ENCODE measurements at regions of chrX and their contacts with region 1.

Region 1: DNA sequence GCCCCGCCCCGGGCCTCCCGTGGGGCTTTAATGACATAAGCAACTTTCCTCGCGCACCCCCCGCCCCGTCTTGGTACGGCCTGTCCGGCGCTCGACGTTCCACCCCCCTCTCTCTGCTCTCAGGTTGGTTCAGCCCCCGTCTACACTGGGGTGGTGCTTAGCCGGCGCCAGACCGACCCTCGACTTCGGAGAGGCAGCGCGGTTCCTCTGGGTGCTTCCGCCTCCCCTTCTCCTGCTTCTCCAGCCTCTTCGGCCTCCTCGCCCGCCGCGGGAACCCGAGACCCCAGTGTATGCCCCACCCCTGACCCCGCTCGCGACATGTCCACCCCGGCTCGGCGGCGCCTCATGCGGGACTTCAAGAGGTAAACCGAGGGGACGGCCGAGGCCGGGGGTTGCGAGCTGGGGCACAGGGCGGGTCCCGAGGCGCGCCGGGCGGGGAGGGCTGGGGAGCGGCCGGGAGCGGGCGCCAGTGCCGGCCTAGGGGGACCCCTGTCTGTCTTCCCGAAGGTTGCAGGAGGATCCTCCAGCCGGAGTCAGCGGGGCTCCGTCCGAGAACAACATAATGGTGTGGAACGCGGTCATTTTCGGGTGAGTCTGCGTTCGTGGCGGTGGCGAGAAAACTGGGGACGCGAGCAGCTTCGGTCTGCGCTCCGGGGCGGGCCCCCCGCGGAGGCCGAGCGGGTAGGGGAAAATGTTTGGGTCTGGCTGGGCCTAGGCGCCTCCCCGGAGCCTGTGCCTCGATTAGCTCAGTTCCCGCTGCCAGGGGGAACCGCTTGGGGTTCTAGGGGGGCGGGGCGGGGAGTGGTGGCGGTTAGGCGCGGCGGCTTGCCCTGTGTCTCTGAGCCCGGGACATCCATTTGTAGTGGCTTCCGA is at the start of gene UBE2A:
- DNase-seq: peak; percentile 87 to 95 (median 92)
- ATAC-seq: peak; percentile 93
- H3K4me3 ChIP-seq: peak within 1 kb of the TSS; percentile 88
- H3K27ac ChIP-seq: peak within 1 kb of the TSS; percentile 88
- H3K4me1 ChIP-seq: peaks cover 8 to 10% of the 10 kb centered on the region in 2 experiments; a peak in 3 of 5 replicates
- H3K27me3 ChIP-seq: no peaks in the 10 kb centered on the region
- CTCF ChIP-seq: peak; percentile 49 to 65 (median 56); a peak in 5 of 6 replicates
- EP300 ChIP-seq: peak; percentile 8; the same call in 1 of the 2 replicates
- POLR2A ChIP-seq: peak; percentile 97
- RAD21 ChIP-seq: peak; percentile 48 to 53
- polyA plus RNA-seq, gene UBE2A: 23.8 to 34.0 TPM

Region 2: DNA sequence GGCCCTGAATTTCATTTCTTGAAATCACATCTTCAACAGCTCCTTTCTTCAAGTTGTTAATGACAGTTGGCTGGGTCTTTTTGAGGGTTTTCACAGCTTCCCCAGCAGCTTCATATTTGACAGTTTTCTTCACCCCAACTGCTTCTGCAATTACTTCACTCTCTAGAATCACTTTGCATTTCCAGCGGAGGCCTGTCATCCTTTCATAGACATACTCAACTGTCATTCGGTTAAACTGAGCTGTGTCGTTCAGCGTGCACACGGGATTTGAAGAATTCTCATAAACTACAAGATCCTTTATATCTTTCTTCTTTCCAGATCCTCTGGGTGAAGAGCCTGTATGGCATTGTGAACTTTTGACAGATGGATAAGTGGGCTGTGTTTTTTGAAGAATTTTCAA is 15.2 kb after region 1 on chrX:
- CTCF ChIA-PET with region 1: no interaction called
- POLR2A ChIA-PET with region 1: interaction called, 12 read pairs
- in situ Hi-C with region 1: no loop called
- intact Hi-C with region 1: no loop called
- DNase-seq: no peak
- ATAC-seq: no peak
- H3K4me3 ChIP-seq: no peak overlapping the region
- H3K27ac ChIP-seq: no peak overlapping the region
- H3K4me1 ChIP-seq: no peaks in the 10 kb centered on the region
- H3K27me3 ChIP-seq: no peaks in the 10 kb centered on the region
- CTCF ChIP-seq: no peak
- EP300 ChIP-seq: no peak
- POLR2A ChIP-seq: no peak
- RAD21 ChIP-seq: no peak

Region 3: GRCh38 chrX:119698845-119699244 is 124.2 kb after region 1 on chrX:
- CTCF ChIA-PET with region 1: no interaction called
- POLR2A ChIA-PET with region 1: no interaction called
- in situ Hi-C with region 1: no loop called
- intact Hi-C with region 1: no loop called
- DNase-seq: peak; percentile 23 to 66 (median 42)
- ATAC-seq: peak; percentile 78
- H3K4me3 ChIP-seq: no peak overlapping the region
- H3K27ac ChIP-seq: no peak overlapping the region
- H3K4me1 ChIP-seq: peaks cover 0 to 13% of the 10 kb centered on the region in 2 experiments; a peak in 3 of 5 replicates
- H3K27me3 ChIP-seq: no peaks in the 10 kb centered on the region
- CTCF ChIP-seq: peak; percentile 58 to 71 (median 65)
- EP300 ChIP-seq: no peak
- POLR2A ChIP-seq: no peak
- RAD21 ChIP-seq: peak in 1 of 2 experiments; percentile 54; a peak in 3 of 4 replicates